ENCODE measurements at regions of chr11 and their contacts with region 1.

Region 1: GRCh38 chr11:111429066-111429506 is 50.0 kb upstream of the POU2AF1 start:
- DNase-seq: peak; percentile 61
- CTCF ChIP-seq: peak; percentile 65

Region 2: DNA sequence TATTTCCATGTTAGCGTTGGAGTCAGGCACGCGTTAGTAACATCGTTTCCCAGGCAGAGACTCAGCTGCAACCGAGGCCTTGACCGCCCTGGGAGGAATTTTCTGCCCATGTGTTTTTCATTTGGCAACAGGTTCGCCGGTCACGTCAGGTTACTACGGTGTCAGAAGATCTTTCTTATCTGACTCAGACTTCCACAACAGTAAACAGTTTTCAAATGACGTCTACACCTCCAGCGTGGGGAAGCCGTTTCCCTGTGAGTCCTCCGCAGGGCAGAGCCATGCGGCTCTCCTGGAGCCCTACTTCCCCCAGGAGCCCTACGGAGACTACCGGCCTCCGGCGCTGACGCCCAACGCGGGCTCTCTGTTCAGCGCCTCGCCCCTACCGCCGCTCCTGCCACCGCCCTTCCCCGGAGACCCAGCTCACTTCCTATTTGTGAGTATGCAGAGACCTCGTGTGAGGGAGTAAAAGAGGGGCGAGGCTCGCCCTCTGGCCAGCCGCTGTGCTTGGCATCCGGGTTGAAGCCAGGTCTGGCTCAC is 145.1 kb before region 1 on chr11:
- in situ Hi-C with region 1: loop called (anchors 5 kb)
- DNase-seq: no peak
- CTCF ChIP-seq: no peak

Region 3: DNA sequence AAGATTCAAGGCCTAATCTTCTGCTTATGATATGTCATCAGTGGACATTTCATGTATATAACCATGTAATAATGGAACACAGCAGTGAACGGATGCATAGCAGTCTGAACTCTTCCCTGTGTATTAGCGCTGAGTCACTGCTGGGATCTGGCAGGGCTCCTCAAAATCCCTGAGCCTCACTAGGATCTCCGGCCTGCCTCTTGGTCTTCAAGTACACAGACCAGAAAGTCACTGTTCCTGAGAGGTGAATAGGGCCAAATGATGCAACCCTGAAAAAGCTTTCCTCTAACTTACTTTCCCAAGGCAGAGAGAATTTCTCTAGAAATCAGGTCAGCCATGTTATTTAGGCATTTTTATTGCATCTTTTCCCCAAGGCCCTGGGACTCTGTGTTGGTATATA is 85.1 kb before region 1 on chr11:
- in situ Hi-C with region 1: no loop called
- DNase-seq: no peak
- CTCF ChIP-seq: no peak